ENCODE measurements at regions of chr10 and their contacts with region 1.

Region 1: GRCh38 chr10:88525371-88526079 is 57.6 kb downstream of the RNLS start:
- DNase-seq: peak; percentile 60
- H3K4me3 ChIP-seq: no peak overlapping the region
- H3K27ac ChIP-seq: no peak overlapping the region
- H3K4me1 ChIP-seq: peaks cover 0 to 10% (median 0%) of the 10 kb centered on the region in 4 donors
- H3K27me3 ChIP-seq: no peaks in the 10 kb centered on the region
- CTCF ChIP-seq: no peak
- EP300 ChIP-seq: no peak
- POLR2A ChIP-seq: no peak

Region 2: DNA sequence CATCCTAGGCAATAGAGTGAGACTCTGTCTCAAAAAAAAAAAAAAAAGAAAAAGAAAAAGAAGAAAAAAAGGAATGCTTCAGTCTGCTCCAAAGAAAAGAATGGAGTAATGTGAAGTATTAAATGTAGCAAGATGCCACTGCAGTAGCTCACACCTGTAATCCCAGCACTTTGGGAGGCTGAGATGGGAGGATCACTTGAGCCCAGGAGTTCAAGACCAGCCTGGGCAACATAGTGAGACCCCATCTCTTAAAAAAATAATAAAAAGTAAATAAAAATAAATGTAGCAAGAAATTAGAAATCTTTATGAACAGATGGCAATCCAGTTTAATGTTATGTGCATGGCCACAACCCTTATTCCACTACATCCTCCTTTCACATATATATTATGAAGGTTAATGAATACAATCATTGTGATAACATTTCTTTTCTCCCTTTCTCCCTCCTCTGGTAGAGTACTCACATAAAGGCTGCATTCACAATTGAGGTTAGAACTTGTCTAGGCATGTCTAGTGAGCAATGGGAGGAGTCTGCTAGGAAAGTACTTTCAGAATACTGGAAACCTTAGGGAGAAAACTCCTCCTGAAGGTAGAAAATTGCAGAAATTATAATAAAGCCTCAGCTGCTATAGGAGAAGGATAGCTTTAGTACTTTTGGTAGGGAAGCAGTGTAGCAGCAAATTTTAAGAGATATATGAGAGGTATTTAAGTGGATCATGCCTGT is 682.6 kb before region 1 on chr10:
- in situ Hi-C with region 1: loop called in 1 of 4 experiments (anchors 25 kb)
- intact Hi-C with region 1: no loop called
- DNase-seq: no peak
- H3K4me3 ChIP-seq: no peak overlapping the region
- H3K27ac ChIP-seq: peak overlapping the region; percentile 56 to 67 (median 65)
- H3K4me1 ChIP-seq: peaks cover 0 to 16% (median 6%) of the 10 kb centered on the region in 4 donors
- H3K27me3 ChIP-seq: no peaks in the 10 kb centered on the region
- CTCF ChIP-seq: no peak
- EP300 ChIP-seq: no peak
- POLR2A ChIP-seq: no peak

Region 3: GRCh38 chr10:88309365-88309764 is 216.2 kb before region 1 on chr10:
- in situ Hi-C with region 1: no loop called
- intact Hi-C with region 1: no loop called
- DNase-seq: no peak
- H3K4me3 ChIP-seq: no peak overlapping the region
- H3K27ac ChIP-seq: no peak overlapping the region
- H3K4me1 ChIP-seq: no peaks in the 10 kb centered on the region
- H3K27me3 ChIP-seq: no peaks in the 10 kb centered on the region
- CTCF ChIP-seq: no peak
- EP300 ChIP-seq: no peak
- POLR2A ChIP-seq: no peak

Region 4: GRCh38 chr10:88490231-88490980 is 35.1 kb before region 1 on chr10:
- in situ Hi-C with region 1: no loop called
- intact Hi-C with region 1: no loop called
- DNase-seq: no peak
- H3K4me3 ChIP-seq: no peak overlapping the region
- H3K27ac ChIP-seq: no peak overlapping the region
- H3K4me1 ChIP-seq: peaks cover 0 to 9% (median 4%) of the 10 kb centered on the region in 4 donors
- H3K27me3 ChIP-seq: no peaks in the 10 kb centered on the region
- CTCF ChIP-seq: no peak
- EP300 ChIP-seq: no peak
- POLR2A ChIP-seq: no peak

Region 5: DNA sequence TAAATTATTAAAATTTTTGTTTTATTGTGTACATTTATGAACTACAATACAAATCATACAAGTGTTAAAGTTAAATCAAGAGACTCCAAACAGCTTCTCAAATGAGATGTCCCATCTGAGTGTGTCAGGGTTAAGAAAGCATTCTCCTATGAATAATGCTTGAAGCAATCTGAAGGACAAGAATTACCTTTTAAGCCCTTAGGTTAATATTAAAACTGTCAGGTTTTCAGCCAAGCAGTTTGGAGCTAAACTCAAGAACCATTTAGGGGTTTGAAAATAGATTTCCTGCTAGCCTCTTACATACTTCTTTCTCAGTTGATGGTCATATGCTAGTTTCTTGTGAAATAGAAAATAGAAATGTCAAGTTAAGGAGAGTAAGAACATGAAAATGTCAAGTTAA is 99.3 kb after region 1 on chr10:
- in situ Hi-C with region 1: no loop called
- intact Hi-C with region 1: no loop called
- DNase-seq: no peak
- H3K4me3 ChIP-seq: no peak overlapping the region
- H3K27ac ChIP-seq: no peak overlapping the region
- H3K4me1 ChIP-seq: no peaks in the 10 kb centered on the region
- H3K27me3 ChIP-seq: no peaks in the 10 kb centered on the region
- CTCF ChIP-seq: no peak
- EP300 ChIP-seq: no peak
- POLR2A ChIP-seq: no peak

Region 6: GRCh38 chr10:89197473-89197872 is 671.9 kb after region 1 on chr10:
- in situ Hi-C with region 1: no loop called
- intact Hi-C with region 1: loop called (anchors 5 kb)
- DNase-seq: no peak
- H3K4me3 ChIP-seq: no peak overlapping the region
- H3K27ac ChIP-seq: no peak overlapping the region
- H3K4me1 ChIP-seq: no peaks in the 10 kb centered on the region
- H3K27me3 ChIP-seq: peaks cover 4% of the 10 kb centered on the region
- CTCF ChIP-seq: no peak
- EP300 ChIP-seq: no peak
- POLR2A ChIP-seq: no peak